Right ventricle myocardium inferior (tissue), 1 donor: ENCODE measurements at regions of chr2 and their contacts with region 1.

Region 1: GRCh38 chr2:168773719-168774521 is 28.5 kb upstream of the NOSTRIN start:
- DNase-seq: no peak
- ATAC-seq: peak; percentile 50

Region 2: DNA sequence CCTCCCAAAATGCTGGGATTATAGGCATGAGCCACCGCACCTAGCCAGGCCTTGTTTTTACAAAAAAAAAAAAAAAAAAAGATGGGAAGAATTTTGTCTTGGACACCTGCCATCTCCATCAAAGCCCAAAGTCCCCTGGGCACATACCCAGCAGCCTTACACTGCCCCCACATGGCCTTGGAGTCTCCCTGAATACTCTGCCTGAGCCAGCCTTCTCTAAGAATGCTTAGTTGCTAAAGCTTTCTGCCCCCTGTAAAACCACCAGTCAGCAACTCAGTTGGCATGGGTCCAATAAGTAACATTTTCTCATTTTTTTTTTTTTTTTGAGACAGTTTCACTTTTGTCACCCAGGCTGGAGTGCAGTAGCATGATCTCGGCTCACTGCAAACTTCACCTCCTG is 75.7 kb after region 1 on chr2:
- intact Hi-C with region 1: loop called (anchors 2 kb)
- DNase-seq: no peak
- ATAC-seq: no peak

Region 3: DNA sequence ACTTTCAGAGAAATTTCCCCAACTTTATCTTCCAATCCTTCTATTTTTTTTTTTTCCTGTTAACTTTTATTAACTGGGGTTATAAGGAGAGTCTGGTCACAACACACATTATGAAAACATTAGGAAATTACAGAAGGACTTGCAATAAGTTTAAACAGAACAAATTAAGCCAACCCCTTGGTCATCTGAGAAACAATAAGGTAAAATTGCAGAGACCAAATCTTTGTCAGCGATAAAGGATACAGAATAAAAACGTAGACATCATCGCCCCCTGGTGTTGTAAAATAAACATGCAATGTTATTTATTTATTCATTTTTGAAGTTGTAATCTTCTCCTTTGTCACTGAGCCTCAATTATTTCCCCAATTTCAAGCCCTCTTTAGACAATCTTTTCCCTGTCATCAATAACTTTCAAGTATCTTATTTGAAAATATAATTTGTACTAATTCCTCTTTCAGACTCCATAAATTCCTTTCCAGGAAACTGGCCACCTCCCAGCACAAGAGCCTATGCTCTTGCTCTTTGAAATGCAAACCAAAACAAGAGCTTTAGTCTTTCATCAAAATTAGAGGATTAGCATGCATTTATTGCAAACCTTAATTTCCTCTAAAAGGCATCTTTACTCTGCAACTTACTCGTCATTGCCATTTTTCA is 146.7 kb after region 1 on chr2:
- intact Hi-C with region 1: loop called (anchors 5 kb)
- DNase-seq: no peak
- ATAC-seq: no peak